Activated CD8-positive, alpha-beta memory T cell treated with anti-CD3 and anti-CD28 coated beads, Interleukin-2, amount 10 ng/mL, durations not matched to agents 7 days and 5 days (primary cell): ENCODE measurements at regions of chr1 and their contacts with region 1.

Region 1: DNA sequence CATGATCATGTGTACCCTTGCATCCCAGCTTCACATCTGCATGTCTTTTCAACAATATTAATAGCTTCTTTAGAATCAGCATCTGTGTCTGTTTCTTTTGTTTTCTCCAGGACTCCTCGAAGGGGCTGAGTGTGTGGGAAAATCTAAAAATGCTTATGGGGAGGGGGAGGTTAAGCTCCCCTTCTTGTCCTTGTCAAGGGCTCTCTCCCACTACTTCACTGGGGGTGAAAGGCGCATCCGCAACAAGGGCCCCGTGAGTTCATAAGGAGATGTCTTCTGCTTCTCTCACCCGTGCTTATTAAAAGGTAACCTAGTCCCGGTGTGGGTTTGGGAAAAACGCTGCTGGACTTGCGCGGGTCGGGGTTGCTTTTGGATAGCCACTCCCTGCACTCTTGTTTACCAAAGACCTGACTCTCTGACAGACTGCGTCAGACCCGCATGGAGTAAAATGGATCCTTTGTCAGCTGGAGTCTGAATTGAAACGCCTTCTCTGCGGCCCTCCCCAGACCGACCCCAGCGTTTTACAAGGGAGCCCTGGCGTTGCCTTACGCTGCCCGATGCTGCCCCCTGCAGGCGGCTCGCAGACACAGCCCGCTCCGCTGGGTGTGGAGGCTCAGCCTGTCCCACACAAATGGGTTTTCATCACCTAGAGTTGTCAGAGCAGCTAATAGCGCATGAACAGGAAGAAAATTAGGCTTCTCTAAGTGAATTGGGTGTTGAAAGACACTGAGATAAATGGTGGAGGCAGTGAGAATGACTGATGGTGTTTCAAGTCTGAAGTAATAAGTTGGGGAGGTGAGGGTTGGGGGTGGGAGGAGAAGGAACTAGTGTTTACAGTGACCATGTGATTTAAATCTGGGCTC is 53.8 kb downstream of the IER5 start:
- DNase-seq: peak; percentile 94
- ATAC-seq: peak; percentile 88
- H3K4me3 Mint-ChIP-seq: peak overlapping the region; percentile 35
- H3K27ac Mint-ChIP-seq: peak overlapping the region; percentile 86
- H3K4me1 Mint-ChIP-seq: peaks cover 64% of the 10 kb centered on the region
- H3K27me3 Mint-ChIP-seq: peaks cover 9% of the 10 kb centered on the region

Region 2: GRCh38 chr1:180851995-180852887 is 290.1 kb before region 1 on chr1:
- CTCF ChIA-PET with region 1: no interaction called
- DNase-seq: no peak
- ATAC-seq: peak; percentile 36
- H3K4me3 Mint-ChIP-seq: no peak overlapping the region
- H3K27ac Mint-ChIP-seq: no peak overlapping the region
- H3K4me1 Mint-ChIP-seq: peaks cover 14% of the 10 kb centered on the region
- H3K27me3 Mint-ChIP-seq: no peaks in the 10 kb centered on the region

Region 3: DNA sequence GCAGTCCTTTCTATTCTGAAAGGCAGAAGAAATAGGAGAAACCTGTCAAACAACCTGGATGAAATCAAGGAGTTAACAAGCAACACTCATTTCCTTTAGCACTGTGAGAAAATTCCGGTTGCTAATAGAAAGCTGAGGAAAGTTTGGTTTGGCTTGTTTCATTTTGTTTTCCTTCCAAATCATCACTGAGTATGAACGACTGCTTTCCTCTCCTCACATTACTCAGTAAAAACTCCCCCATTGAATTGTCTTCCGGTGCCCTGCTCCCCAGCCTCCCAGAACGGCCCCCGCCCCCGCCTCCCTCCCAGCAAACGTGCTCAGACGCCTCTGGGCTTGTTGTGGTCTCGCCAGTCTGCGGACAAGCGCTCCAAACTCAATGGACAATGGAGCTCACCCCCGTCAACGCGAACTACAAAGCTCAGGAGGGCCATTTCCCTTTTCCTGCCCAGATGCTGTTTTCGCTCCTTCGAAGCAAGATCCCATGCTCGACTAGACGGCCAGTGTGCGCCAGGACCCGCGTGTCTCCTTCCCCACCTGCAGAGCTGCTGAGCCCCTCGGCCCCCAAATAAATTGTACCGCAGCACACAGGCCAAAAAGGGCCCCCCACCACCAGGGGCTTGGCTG is 120.4 kb before region 1 on chr1:
- CTCF ChIA-PET with region 1: interaction called, 16 read pairs
- DNase-seq: peak; percentile 80
- ATAC-seq: peak; percentile 48
- H3K4me3 Mint-ChIP-seq: peak overlapping the region; percentile 94
- H3K27ac Mint-ChIP-seq: peak overlapping the region; percentile 90
- H3K4me1 Mint-ChIP-seq: peaks cover 39% of the 10 kb centered on the region
- H3K27me3 Mint-ChIP-seq: peaks cover 7% of the 10 kb centered on the region

Region 4: DNA sequence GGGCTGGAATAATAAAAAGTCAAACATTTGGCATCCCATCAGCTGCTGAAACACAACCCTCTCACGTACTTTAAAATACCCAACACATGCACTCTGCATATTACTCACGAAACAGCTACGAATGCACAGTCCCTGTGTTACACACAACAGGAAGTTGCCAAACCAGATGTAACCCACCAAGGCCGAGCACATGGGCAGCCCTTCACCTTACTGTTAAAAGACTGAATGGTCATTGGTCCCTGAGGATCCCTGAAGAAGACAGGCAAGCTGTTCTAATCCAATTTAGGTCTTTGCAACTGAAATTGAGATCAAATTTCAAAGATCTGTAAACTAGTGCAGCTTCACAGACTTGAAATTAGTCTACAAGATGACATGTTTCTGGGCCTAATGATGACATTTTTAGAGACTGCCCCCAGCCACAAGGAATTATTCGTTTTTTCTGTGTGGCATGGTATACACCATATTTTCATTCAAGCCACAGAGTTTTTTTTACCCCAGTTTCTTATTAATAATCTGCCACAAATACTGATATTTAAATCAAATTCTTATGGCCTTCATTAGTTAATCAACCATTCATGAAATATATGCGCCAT is 79.4 kb before region 1 on chr1:
- CTCF ChIA-PET with region 1: interaction called, 23 read pairs
- DNase-seq: peak; percentile 83
- ATAC-seq: peak; percentile 97
- H3K4me3 Mint-ChIP-seq: peak overlapping the region; percentile 60
- H3K27ac Mint-ChIP-seq: peak overlapping the region; percentile 82
- H3K4me1 Mint-ChIP-seq: peaks cover 22% of the 10 kb centered on the region
- H3K27me3 Mint-ChIP-seq: no peaks in the 10 kb centered on the region

Region 5: DNA sequence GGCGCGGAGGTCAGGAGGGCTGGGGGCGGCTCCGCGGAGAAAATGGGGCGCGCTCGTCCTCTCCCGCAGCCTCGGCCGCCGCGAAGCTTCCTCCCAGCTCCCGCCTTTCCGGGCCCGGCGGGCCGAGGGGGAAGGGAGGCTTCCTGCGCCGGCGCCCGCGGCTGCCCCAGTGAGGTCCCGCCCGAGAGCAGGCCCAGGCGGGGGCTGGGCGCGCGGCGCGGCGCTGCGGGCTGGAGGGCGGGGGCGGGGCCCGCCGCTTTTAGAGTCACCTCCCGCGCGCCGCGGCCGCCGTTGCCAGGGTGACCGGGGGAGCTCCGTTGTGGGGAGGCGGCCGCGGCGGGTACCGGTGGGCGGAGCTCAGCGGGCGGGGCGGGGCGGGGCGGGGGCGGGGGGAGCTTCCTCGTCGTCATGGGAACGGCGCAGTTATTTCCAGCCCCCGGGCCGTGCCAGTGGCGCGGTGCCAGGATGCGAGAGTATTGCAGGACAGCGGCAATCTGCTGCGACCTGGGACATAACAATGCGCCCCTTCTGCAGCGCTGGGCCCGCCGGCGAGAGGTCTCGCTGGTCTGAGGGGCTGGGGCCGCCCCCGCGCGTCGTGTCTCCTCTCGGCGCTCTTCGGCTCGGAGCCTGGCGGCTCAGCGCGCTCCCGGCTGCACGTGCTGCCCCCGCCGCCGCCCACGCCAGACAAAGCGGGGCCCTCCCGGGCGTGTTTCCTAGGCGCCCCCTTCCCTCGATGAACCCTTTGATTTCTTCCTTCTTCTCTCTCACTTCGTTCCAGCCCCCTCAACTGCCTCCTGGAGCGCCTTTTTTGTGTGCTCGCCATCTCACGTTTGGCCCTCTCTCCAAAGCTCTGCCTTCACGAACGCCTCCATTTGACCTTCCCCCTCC is 36.9 kb before region 1 on chr1:
- CTCF ChIA-PET with region 1: interaction called, 210 read pairs
- DNase-seq: peak; percentile 93
- ATAC-seq: peak; percentile 87
- H3K4me3 Mint-ChIP-seq: peak overlapping the region; percentile 78
- H3K27ac Mint-ChIP-seq: peak overlapping the region; percentile 69
- H3K4me1 Mint-ChIP-seq: peaks cover 60% of the 10 kb centered on the region
- H3K27me3 Mint-ChIP-seq: peaks cover 42% of the 10 kb centered on the region

Region 6: DNA sequence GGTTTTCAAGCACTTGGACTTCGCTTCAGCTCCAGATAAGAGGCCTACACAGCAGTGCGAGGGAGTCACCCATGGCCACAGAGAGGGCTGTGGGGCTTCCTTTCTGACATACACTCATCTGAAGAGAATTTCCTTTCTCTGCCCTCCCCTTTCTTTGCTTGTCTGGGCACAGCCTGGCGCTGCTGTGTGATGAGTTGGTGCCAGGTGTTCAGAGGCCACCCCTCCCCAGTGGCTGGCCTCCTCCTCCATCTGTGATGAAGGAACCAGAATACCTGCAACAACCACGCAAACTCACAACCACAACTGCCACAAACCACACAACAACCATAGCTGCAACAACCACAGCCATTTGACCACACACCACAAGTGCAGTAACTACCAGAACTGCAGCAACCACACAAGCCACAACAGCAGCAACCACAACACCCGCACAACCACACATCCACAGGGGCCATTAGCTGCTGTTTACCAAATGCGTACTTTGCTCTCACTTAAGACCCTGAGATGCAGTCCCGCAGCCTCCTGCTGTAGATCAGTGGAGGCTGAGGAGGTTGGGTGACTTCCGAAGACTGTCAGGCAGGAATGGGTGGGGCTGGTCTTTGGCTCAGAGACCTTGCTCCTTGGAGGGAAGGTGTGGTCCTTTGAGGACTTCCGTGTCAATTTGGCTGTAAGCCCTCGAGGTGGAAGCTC is 17.3 kb after region 1 on chr1:
- CTCF ChIA-PET with region 1: interaction called, 70 read pairs
- DNase-seq: peak; percentile 77
- ATAC-seq: peak; percentile 83
- H3K4me3 Mint-ChIP-seq: peak overlapping the region; percentile 46
- H3K27ac Mint-ChIP-seq: peak overlapping the region; percentile 88
- H3K4me1 Mint-ChIP-seq: peaks cover 33% of the 10 kb centered on the region
- H3K27me3 Mint-ChIP-seq: peaks cover 25% of the 10 kb centered on the region